ENCODE measurements at regions of chr9 and their contacts with region 1.

Region 1: DNA sequence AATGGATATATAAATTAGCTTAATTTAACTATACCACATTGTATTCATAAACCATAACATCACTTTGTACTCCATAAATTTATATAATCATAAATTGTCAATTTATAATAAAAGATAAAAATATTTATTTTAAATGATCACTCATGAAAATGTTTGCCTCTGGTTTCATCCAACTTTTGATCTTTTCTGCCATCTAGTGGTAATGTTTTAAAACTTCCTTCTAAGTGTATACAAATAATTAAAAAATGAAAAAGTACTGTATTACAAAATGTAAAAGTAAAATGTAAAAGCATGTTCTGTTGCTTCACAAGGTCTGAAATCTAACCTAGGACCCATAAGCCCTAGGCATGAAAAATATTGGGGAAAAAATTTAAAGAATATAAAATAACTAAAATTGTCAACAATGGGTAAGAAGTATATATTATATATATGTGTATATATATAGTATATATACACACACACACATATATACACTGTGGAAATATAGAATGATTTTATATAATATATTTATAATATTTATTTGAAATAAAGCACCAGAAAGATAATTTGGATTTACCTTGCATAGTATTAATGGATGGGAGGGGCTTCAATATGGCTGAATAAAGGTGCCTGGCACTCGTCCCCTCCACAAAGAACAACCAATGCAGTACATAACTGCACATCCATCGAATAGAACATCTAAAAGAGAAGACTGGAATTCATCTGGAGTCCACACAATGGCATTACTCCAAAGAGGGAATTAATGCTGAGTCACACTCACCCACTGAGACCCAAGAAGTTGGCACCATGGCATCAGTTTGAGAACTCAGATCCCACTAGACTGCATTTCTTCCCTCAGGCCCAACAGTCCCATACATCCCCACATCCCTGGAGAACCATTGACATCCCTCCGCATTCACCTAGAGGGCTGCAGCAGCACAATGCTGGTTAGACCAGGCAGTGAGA is 32.5 kb downstream of the ANXA1 start:
- DNase-seq: no peak
- ATAC-seq: no peak
- H3K4me3 ChIP-seq: no peak overlapping the region
- H3K27ac ChIP-seq: no peak overlapping the region
- H3K4me1 ChIP-seq: no peaks in the 10 kb centered on the region
- H3K27me3 ChIP-seq: no peaks in the 10 kb centered on the region
- CTCF ChIP-seq: no peak

Region 2: DNA sequence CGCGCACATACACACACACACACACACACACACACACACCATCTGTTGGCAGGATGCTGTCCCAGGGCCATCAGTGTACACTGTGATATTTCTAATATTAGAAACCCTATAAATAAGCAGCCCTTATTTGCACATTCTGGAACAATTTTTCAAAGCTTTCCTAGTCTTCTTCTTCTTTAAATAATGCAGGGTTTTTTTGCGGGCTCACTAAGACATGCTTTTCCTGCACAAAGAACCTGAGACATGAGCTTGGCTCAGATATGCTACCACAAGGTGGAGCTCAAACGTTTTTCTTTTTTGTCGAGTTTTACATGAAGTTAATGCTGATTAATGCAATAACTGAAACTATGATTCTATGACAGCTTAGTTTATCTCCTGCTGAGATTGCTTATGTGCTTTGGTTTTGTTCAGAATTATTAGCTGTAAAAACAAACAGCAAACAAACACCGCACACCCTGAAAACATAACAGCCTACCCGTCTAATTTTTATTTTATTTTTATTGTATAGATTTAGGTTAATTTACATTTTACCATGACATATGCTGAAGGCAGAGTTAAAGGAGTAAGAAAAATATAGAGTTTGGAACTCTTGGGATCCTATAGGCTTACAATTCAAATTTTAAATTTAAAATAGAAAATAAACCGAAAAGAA is 327.1 kb before region 1 on chr9:
- CTCF ChIA-PET with region 1: no interaction called
- POLR2A ChIA-PET with region 1: no interaction called
- in situ Hi-C with region 1: no loop called
- intact Hi-C with region 1: loop called (anchors 5 kb)
- DNase-seq: no peak
- ATAC-seq: peak; percentile 77
- H3K4me3 ChIP-seq: no peak overlapping the region
- H3K27ac ChIP-seq: no peak overlapping the region
- H3K4me1 ChIP-seq: no peaks in the 10 kb centered on the region
- H3K27me3 ChIP-seq: no peaks in the 10 kb centered on the region
- CTCF ChIP-seq: peak; percentile 66

Region 3: DNA sequence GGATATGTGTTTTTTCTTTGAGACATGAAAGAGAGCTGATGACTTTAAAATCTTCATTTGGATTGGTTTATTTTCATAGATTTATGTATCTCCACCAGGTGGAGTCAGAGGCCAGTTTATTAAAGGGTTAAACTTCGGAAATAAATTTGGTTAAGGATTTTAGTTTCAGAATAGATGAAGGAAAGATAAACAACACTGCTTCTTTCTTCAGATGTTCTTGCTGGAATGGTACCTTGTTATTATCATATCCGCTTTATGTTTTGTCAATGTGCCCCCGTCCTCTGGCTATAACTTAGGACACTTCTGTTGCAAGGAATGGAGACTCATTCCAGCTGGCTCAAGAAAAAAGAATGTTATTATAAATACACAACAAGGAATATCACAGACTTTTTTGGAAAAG is 312.5 kb before region 1 on chr9:
- CTCF ChIA-PET with region 1: no interaction called
- POLR2A ChIA-PET with region 1: no interaction called
- in situ Hi-C with region 1: no loop called
- intact Hi-C with region 1: loop called (anchors 5 kb)
- DNase-seq: no peak
- ATAC-seq: no peak
- H3K4me3 ChIP-seq: no peak overlapping the region
- H3K27ac ChIP-seq: no peak overlapping the region
- H3K4me1 ChIP-seq: no peaks in the 10 kb centered on the region
- H3K27me3 ChIP-seq: no peaks in the 10 kb centered on the region
- CTCF ChIP-seq: peak; percentile 37; the same call in 1 of the 2 replicates

Region 4: GRCh38 chr9:72948906-72949582 is 235.1 kb before region 1 on chr9:
- CTCF ChIA-PET with region 1: interaction called, 10 read pairs
- POLR2A ChIA-PET with region 1: no interaction called
- in situ Hi-C with region 1: no loop called
- intact Hi-C with region 1: no loop called
- DNase-seq: no peak
- ATAC-seq: no peak
- H3K4me3 ChIP-seq: no peak overlapping the region
- H3K27ac ChIP-seq: no peak overlapping the region
- H3K4me1 ChIP-seq: no peaks in the 10 kb centered on the region
- H3K27me3 ChIP-seq: no peaks in the 10 kb centered on the region
- CTCF ChIP-seq: no peak

Region 5: DNA sequence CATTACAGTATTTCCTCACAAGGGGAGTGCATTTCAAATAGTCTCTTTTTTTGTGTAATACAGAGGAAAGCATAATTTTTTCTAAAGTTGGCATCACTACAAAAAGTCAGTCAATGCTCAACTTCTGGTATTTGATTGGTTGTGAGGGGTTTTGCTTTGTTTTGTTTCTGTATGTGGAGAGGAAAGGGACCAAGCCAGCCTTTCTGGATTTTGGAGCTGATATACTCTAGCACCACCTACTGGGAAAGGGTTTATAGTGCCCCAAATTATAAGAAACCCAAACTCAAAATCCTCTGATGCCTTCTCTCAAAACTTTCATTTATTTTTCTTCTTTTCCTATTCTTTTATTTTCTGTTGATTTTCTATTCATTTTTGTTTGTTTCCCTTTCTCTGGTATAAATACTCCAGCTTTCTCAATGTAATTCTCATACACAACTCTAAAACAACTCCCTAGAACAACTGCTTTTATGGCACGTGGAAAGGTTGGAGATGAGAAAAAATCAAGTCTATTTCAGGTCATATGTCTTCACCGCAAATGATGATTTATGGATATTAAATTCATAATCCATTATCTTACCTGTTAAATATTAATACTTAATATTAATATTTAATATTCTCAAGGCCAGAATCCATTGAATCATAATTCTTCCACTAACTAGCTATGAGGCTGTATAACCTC is 102.1 kb before region 1 on chr9:
- CTCF ChIA-PET with region 1: no interaction called
- POLR2A ChIA-PET with region 1: no interaction called
- in situ Hi-C with region 1: no loop called
- intact Hi-C with region 1: loop called (anchors 5 kb)
- DNase-seq: no peak
- ATAC-seq: no peak
- H3K4me3 ChIP-seq: no peak overlapping the region
- H3K27ac ChIP-seq: no peak overlapping the region
- H3K4me1 ChIP-seq: no peaks in the 10 kb centered on the region; the same call in 1 of the 2 replicates
- H3K27me3 ChIP-seq: no peaks in the 10 kb centered on the region
- CTCF ChIP-seq: peak; percentile 73; the same call in 1 of the 2 replicates

Region 6: DNA sequence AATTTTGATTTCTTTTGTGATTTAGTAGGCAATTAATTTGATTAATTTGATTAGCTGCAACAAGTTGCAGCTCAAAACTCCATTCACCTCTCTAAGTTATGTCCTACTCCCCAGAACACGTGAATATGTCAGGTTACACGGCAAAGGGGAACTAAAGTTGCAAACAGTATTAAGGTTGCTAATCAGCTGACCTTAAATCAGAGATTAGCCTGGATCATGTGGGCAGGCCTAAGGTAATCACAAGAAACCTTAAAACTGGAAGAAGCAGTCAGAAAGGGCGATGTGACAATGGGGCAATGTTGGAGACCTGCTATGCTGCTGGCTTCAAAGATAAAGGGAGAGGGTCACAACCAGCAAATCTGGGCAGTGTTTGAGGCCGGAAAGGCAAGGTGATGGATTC is 79.8 kb before region 1 on chr9:
- CTCF ChIA-PET with region 1: no interaction called
- POLR2A ChIA-PET with region 1: no interaction called
- in situ Hi-C with region 1: no loop called
- intact Hi-C with region 1: loop called (anchors 2 kb)
- DNase-seq: no peak
- ATAC-seq: no peak
- H3K4me3 ChIP-seq: no peak overlapping the region
- H3K27ac ChIP-seq: no peak overlapping the region
- H3K4me1 ChIP-seq: no peaks in the 10 kb centered on the region
- H3K27me3 ChIP-seq: no peaks in the 10 kb centered on the region
- CTCF ChIP-seq: no peak

Region 7: GRCh38 chr9:73230251-73230650 is 46.1 kb after region 1 on chr9:
- CTCF ChIA-PET with region 1: no interaction called
- POLR2A ChIA-PET with region 1: no interaction called
- in situ Hi-C with region 1: no loop called
- intact Hi-C with region 1: no loop called
- DNase-seq: no peak
- ATAC-seq: no peak
- H3K4me3 ChIP-seq: no peak overlapping the region
- H3K27ac ChIP-seq: no peak overlapping the region
- H3K4me1 ChIP-seq: no peaks in the 10 kb centered on the region
- H3K27me3 ChIP-seq: no peaks in the 10 kb centered on the region
- CTCF ChIP-seq: no peak

Measured in Panc1 (cell line).